OCI-LY7 (cell line): ENCODE measurements at regions of chr11 and their contacts with region 1.

Region 1: GRCh38 chr11:107757661-107758060 is 45.8 kb upstream of the SLN start:
- DNase-seq: no peak
- H3K4me3 ChIP-seq: no peak overlapping the region
- H3K27ac ChIP-seq: no peak overlapping the region
- H3K4me1 ChIP-seq: no peaks in the 10 kb centered on the region
- CTCF ChIP-seq: peak; percentile 62

Region 2: GRCh38 chr11:107623183-107623582 is 134.5 kb before region 1 on chr11:
- CTCF ChIA-PET with region 1: no interaction called
- POLR2A ChIA-PET with region 1: interaction called, 12 read pairs
- intact Hi-C with region 1: no loop called
- DNase-seq: no peak
- H3K4me3 ChIP-seq: no peak overlapping the region
- H3K27ac ChIP-seq: no peak overlapping the region
- H3K4me1 ChIP-seq: no peaks in the 10 kb centered on the region
- CTCF ChIP-seq: no peak

Region 3: DNA sequence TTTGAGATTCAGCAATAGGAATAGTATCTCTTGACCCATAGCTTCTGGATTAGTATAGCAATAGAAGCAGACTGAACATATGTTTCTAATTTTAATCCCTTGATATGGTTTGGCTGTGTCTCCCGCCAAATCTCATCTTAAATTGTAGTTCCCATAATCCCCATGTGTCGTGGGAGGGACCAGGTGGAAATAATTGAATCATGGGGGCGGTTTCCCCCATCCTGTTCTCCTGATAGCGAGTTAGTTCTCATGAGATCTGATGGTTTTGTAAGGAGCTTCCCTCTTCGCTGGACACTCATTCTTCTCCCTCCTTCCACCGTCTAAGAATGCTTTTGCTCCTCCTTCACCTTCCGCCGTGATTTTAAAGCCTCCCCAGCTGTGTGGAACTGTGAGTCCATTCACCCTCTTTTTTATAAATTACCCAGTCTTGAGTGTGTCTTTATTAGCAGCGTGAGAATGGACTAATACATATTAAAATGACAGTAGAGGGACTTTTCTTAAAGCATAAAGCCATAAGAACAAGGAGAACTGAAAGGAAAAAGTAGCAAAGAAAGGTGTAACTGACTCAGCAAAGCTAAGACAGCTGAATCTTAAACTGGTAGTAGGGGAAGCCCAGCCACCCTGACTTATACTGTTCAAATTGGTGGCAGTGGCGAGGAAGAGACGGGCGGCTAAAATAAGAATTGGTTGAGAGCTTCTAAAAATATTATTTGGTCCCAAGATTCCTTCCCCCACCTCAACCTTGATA is 25.5 kb before region 1 on chr11:
- CTCF ChIA-PET with region 1: no interaction called
- POLR2A ChIA-PET with region 1: no interaction called
- intact Hi-C with region 1: no loop called
- DNase-seq: no peak
- H3K4me3 ChIP-seq: no peak overlapping the region
- H3K27ac ChIP-seq: no peak overlapping the region
- H3K4me1 ChIP-seq: no peaks in the 10 kb centered on the region
- CTCF ChIP-seq: no peak

Region 4: DNA sequence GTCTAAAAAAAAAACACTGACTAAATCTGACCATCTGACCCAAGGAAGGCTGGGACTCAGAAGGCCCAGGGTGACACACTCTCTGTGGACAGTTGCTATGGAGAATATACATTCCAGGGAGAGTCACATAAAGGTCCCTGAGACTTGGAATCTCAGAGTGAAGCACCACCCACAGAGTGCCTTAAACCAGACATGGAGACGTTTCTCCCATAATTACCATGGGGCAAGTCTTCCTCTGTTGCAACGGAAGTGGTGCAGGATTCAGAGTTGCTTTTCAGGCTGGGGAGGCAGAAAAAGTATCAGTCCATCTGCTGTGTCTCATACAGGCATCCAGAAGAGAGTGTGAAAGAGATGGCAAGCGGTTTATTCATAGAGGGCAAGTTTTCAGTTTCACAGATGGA is 12.9 kb after region 1 on chr11:
- CTCF ChIA-PET with region 1: no interaction called
- POLR2A ChIA-PET with region 1: no interaction called
- intact Hi-C with region 1: no loop called
- DNase-seq: no peak
- H3K4me3 ChIP-seq: no peak overlapping the region
- H3K27ac ChIP-seq: no peak overlapping the region
- H3K4me1 ChIP-seq: no peaks in the 10 kb centered on the region
- CTCF ChIP-seq: no peak